AG04450 (cell line): ENCODE measurements at regions of chr1 and their contacts with region 1.

Region 1: DNA sequence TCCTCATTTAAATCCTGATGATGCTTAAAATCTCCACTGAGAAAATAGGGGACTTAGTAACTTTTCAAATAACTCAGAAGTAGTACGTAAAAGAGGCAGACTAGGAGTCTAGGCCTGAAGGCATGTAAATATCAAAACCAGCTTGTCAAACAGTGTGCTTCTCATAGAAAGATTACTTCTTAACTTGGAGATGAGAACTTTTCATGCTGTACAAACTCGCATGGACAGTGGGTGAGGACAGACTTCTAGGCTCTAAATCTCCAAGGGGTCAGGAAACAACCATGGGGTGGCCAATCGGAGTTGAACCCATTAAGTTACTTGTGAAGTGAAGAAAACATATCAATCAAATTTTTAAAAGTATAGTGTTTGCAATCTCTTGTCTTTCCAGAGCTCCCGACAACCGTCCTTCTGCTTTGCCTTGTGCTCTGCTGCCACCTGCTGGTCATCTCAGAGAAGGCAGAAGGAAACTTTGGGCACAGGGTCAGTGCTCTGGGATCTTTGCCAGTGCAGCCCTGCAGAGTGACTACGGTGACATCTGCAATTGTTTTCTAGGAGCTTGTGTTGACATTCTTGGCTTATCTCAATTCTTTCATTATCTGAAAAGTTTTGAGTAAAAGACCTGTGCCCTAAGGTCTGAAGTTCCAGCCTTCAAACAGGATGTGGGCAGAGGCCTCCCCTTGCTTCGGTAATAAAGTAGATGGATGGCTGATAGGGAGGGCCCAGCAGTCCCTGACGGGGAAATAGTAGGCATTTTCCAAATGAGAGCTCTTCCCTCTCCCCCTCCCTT is 105.1 kb upstream of the PDE4B start:
- DNase-seq: peak; percentile 36
- H3K4me3 ChIP-seq: no peak overlapping the region
- H3K27ac ChIP-seq: no peak overlapping the region
- H3K27me3 ChIP-seq: peaks cover 2% of the 10 kb centered on the region
- CTCF ChIP-seq: peak; percentile 91

Region 2: GRCh38 chr1:65075123-65075976 is 612.3 kb before region 1 on chr1:
- CTCF ChIA-PET with region 1: interaction called, 14 read pairs
- POLR2A ChIA-PET with region 1: no interaction called
- DNase-seq: no peak
- H3K4me3 ChIP-seq: no peak overlapping the region
- H3K27ac ChIP-seq: no peak overlapping the region
- H3K27me3 ChIP-seq: peaks cover 6% of the 10 kb centered on the region
- CTCF ChIP-seq: peak; percentile 81

Region 3: GRCh38 chr1:65235867-65236805 is 451.5 kb before region 1 on chr1:
- CTCF ChIA-PET with region 1: interaction called, 35 read pairs
- POLR2A ChIA-PET with region 1: no interaction called
- DNase-seq: no peak
- H3K4me3 ChIP-seq: no peak overlapping the region
- H3K27ac ChIP-seq: no peak overlapping the region
- H3K27me3 ChIP-seq: no peaks in the 10 kb centered on the region
- CTCF ChIP-seq: peak; percentile 42

Region 4: GRCh38 chr1:65431111-65431705 is 256.4 kb before region 1 on chr1:
- CTCF ChIA-PET with region 1: interaction called, 89 read pairs
- POLR2A ChIA-PET with region 1: no interaction called
- DNase-seq: no peak
- H3K4me3 ChIP-seq: no peak overlapping the region
- H3K27ac ChIP-seq: no peak overlapping the region
- H3K27me3 ChIP-seq: no peaks in the 10 kb centered on the region
- CTCF ChIP-seq: peak; percentile 69

Region 5: DNA sequence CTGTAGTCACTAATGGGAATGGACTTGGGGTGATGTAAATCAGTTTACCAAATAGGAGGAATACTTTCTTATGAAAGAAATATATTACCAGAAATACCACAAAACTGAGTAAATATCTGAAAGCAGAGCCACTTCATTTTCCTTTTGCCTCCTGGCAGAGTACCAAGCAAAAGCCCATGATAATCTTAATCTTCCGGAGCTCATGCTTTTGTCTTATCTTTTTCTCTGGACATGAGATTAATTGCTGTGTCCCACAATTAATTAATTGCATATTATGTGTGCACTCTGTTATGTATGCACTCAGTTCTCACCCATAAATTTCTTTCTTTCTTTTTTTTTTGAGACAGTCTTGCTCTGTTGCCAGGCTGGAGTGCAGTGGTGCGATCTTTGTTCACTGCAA is 11.0 kb after region 1 on chr1:
- CTCF ChIA-PET with region 1: interaction called, 20 read pairs
- POLR2A ChIA-PET with region 1: no interaction called
- DNase-seq: no peak
- H3K4me3 ChIP-seq: no peak overlapping the region
- H3K27ac ChIP-seq: no peak overlapping the region
- H3K27me3 ChIP-seq: peaks cover 4% of the 10 kb centered on the region
- CTCF ChIP-seq: no peak